Psoas muscle (tissue), 8 donors: ENCODE measurements at regions of chr6 and their contacts with region 1.

Region 1: GRCh38 chr6:148379966-148380713 is 37.5 kb downstream of the SASH1 start:
- DNase-seq: peak; percentile 41 to 60
- ATAC-seq: peak; percentile 68 to 92 (median 80)
- H3K4me3 ChIP-seq: no peak overlapping the region
- H3K27ac ChIP-seq: peak overlapping the region; percentile 47
- H3K4me1 ChIP-seq: peaks cover 13% of the 10 kb centered on the region
- H3K27me3 ChIP-seq: no peaks in the 10 kb centered on the region
- CTCF ChIP-seq: no peak

Region 2: DNA sequence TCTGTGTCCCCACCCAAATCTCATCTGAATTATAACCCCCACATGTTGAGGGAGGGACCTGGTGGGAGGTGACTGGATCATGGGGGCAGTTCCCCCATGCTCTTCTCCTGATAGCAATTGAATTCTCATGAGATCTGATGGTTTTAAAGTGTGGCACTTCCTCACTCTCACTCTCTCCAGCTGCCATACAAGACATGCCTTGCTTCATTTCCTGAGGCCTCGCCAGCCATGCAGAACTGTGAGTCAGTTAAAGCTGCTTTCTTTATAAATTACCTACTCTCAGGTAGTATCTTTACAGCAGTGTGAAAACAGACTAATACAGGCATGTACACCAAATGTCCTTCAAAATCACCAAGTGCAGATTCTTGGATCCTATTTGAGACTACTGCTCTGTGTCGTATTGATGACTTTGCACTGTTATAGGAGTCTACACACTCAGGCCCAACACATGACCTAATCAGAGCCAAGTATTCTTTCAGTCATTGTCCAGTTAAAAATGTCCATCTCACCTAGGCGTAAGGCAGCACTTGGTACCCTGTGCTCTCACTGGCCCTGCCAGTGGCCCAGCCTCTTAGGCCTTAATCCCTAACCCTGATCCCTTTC is 313.8 kb after region 1 on chr6:
- intact Hi-C with region 1: loop called in 1 of 2 experiments (anchors 5 kb)
- DNase-seq: no peak
- ATAC-seq: no peak
- H3K4me3 ChIP-seq: no peak overlapping the region
- H3K27ac ChIP-seq: no peak overlapping the region
- H3K4me1 ChIP-seq: no peaks in the 10 kb centered on the region
- H3K27me3 ChIP-seq: no peaks in the 10 kb centered on the region
- CTCF ChIP-seq: no peak